ENCODE measurements at regions of chrX and their contacts with region 1.

Region 1: GRCh38 chrX:135484641-135485289 is 35.7 kb upstream of the INTS6L start:
- DNase-seq: no peak
- H3K4me3 ChIP-seq: no peak overlapping the region
- H3K27ac ChIP-seq: no peak overlapping the region
- H3K4me1 ChIP-seq: no peaks in the 10 kb centered on the region
- H3K27me3 ChIP-seq: no peaks in the 10 kb centered on the region
- CTCF ChIP-seq: peak; percentile 42

Region 2: GRCh38 chrX:134711135-134711921 is 773.4 kb before region 1 on chrX:
- intact Hi-C with region 1: no loop called
- DNase-seq: no peak
- H3K4me3 ChIP-seq: no peak overlapping the region
- H3K27ac ChIP-seq: no peak overlapping the region
- H3K4me1 ChIP-seq: no peaks in the 10 kb centered on the region
- H3K27me3 ChIP-seq: no peaks in the 10 kb centered on the region
- CTCF ChIP-seq: no peak

Region 3: DNA sequence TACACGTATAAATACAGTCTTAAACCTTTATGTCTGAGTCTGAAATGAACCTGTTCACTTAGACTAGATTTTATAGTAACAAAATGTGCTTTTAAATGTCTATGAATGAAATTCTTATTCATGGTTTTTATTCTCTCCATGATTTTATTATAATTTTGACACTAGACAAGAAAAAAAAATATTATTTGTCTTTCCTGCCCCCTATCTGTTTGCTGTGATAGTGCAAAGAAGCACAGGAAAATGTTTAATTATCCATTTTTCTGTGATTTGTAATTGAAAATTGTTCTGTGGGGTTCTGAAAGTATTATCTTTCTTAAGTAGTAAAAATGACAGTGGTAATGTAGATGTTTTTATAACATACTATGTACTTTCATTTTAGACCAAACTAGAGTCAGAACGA is 87.7 kb after region 1 on chrX:
- intact Hi-C with region 1: loop called (anchors 10 kb)
- DNase-seq: no peak
- H3K4me3 ChIP-seq: no peak overlapping the region
- H3K27ac ChIP-seq: no peak overlapping the region
- H3K4me1 ChIP-seq: no peaks in the 10 kb centered on the region
- H3K27me3 ChIP-seq: no peaks in the 10 kb centered on the region
- CTCF ChIP-seq: no peak

Region 4: DNA sequence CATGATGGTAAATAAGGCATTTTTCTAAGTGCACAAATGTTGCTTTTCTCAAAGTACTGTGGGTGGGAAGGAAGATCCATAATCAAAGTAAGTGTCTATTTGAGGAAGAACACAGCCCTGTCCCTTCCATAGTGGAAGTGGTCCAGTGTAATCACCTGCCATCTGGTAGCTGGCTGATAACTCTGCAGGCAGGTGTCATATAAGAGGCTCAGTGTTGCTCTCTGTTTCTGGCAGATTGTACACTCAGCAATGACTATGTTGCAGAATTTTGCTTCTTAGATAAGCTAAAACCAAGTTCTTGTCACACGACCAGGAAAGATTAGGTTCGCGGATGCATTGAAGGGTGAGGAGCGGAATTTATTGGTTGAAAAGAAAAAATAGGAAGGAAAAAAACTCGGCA is 429.6 kb after region 1 on chrX:
- intact Hi-C with region 1: no loop called
- DNase-seq: no peak
- H3K4me3 ChIP-seq: no peak overlapping the region
- H3K27ac ChIP-seq: no peak overlapping the region
- H3K4me1 ChIP-seq: no peaks in the 10 kb centered on the region
- H3K27me3 ChIP-seq: no peaks in the 10 kb centered on the region
- CTCF ChIP-seq: no peak

Measured in colonic mucosa (tissue), 4 donors.